HEK293 (cell line): ENCODE measurements at regions of chr12 and their contacts with region 1.

Region 1: DNA sequence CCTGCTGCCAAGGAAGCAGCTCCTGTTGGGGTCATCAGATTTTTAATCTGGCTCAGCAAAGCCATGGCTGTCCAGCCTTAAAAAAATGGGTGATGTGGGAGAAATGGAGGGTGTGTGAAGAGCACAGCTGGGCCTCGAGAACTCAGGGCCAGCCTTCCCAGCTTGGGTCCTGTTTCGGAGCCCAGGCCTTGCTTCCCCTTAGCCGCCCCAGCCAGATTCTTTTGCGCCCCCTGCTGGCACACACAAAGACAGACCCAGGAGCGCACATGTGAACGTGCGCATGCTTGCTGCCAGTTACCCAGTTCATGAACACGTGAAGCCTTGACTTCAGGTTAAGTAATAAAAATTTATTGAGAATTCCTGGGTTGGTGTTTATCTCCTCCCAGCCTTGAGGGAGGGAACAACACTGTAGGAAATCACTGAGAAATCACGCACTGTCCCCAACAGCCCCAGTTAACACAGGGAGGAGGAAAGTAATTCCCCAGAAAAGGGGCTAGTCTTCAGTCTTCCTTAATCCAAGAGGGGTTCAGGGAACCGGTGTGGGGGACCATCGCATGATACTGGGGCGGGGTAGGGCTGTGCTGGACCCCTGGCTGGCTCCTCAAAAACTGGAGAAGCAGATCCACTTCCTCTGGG is 5.3 kb downstream of the PHB2 start:
- H3K4me3 ChIP-seq: no peak overlapping the region
- H3K27ac ChIP-seq: peak overlapping the region; percentile 1; the same call in 1 of the 2 replicates
- H3K4me1 ChIP-seq: peaks cover 2% of the 10 kb centered on the region; the same call in 1 of the 2 replicates
- CTCF ChIP-seq: peak; percentile 93

Region 2: DNA sequence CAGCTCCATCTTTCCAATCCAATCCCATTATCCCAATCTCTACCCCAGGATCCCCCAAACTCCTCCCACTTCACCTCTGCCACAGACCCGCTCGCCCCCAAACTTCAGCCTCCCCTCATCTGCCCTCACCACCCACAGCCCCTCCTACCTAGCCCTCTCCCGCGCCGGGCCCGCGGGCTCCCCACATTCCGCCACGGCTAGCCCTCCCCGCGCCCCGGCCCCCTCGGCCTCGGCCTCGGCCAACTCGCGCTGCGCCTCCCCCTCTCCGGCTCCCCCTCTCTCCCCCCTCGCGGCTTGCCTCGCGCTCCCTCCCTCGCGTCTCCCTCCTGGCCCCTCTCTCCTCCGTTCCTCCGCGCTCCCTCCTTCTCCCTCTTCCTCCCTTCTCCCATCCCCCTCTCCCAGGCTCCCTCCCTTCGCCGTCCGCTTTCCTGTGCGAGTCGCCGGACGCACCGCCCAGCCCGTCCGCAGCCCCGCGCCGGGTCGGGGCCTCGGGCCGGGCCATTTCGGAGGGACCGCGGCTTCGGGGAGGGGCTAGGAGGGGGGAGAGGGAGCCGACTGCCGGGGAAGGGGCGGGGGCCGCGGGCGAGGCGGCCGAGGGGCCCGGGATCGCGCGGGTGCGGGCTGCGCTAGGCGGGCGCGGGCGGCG is 37.6 kb before region 1 on chr12 and contains the start of gene ATN1:
- CTCF ChIA-PET with region 1: interaction called, 52 read pairs
- POLR2A ChIA-PET with region 1: interaction called, 9 read pairs
- H3K4me3 ChIP-seq: peak within 1 kb of the TSS; percentile 74
- H3K27ac ChIP-seq: peak within 1 kb of the TSS; percentile 80
- H3K4me1 ChIP-seq: peaks cover 28% of the 10 kb centered on the region
- CTCF ChIP-seq: 0 out of 2 replicates have a peak, but pooled peaks have one; percentile 38

Region 3: GRCh38 chr12:6937481-6938297 is 27.5 kb before region 1 on chr12:
- CTCF ChIA-PET with region 1: interaction called, 138 read pairs
- POLR2A ChIA-PET with region 1: interaction called, 3 read pairs
- H3K4me3 ChIP-seq: peak overlapping the region; percentile 54
- H3K27ac ChIP-seq: peak overlapping the region; percentile 95
- H3K4me1 ChIP-seq: peaks cover 6% of the 10 kb centered on the region
- CTCF ChIP-seq: peak; percentile 98

Region 4: DNA sequence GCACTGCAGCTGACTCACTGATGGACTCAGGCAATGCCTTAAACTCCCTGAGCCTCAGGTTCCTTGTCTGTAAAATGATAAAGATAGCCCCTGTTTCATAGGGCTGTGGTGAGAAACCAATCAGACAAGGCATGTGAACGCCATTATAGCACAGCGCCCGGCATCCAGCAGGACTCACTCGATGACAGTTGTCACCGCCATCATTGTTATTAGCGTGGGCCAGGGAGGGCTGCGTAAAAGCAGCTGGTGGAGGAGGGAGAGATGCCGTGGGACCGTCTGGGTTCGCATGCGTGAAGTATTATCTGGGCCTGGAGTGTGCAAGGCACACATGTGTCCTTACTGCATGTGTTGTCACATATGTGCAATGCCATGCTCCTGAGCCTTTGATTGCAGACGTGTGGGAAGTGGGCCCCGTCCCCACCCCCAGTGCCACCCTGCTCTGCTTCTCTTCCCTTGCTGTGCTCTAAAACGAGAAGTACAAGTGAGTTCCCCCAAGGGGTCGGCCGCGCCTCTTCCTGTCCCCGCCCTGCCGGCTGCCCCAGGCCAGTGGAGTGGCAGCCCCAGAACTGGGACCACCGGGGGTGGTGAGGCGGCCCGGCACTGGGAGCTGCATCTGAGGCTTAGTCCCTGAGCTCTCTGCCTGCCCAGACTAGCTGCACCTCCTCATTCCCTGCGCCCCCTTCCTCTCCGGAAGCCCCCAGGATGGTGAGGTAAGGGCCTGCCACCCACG is 14.2 kb before region 1 on chr12 and contains the start of gene PTPN6:
- CTCF ChIA-PET with region 1: interaction called, 138 read pairs
- POLR2A ChIA-PET with region 1: interaction called, 67 read pairs
- H3K4me3 ChIP-seq: no peak within 1 kb of the TSS
- H3K27ac ChIP-seq: no peak within 1 kb of the TSS
- H3K4me1 ChIP-seq: peaks cover 4% of the 10 kb centered on the region; the same call in 1 of the 2 replicates
- CTCF ChIP-seq: no peak

Region 5: GRCh38 chr12:7162691-7163114 is 197.6 kb after region 1 on chr12:
- CTCF ChIA-PET with region 1: no interaction called
- POLR2A ChIA-PET with region 1: no interaction called
- H3K4me3 ChIP-seq: no peak overlapping the region
- H3K27ac ChIP-seq: no peak overlapping the region
- H3K4me1 ChIP-seq: no peaks in the 10 kb centered on the region
- CTCF ChIP-seq: peak; percentile 46; the same call in 1 of the 2 replicates